ENCODE measurements at regions of chr5 and their contacts with region 1.

Region 1: DNA sequence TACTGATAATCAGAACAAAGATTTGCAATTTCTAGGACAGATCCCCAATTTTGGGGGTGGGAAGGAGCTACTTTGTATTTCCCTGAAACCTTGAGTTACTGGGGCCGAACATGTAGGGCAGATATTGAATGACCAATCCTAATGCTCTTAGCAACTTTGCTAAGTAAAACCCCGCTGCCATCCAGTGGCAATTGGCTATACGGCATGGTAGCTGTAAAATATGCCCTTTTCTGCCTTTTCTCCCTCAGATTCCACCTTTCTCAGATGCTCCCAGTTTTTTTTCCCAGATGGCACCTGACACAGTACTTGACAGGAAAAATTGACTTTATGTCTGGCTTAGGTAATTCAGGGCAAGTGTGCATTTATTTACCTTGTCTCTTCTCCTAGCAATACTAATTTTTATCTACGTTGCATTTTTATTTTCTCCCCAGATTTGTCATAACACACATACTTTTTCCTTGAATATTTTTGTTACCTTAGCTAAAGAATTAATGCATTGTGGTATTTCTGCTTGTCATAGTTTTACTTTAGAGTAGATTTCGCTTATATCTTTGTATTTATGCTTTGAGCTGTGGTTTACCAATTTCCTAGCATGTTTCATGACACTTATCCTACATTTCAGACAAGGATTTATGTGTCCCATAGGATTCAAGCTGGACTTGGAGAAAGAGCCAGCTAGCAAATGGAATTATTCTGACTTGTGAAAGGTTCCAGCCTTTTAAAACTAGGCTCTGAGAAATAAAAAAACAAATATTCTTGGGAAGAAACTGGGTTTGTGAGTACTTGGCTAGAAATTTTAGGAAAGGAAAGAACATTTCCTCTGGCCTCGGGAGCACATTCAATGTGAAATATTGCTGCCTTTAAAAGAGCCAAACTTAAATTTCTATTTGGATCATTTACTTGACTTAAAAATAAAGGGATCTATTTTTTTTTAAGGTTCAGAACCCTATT is 37.4 kb downstream of the PIK3R1 start:
- DNase-seq: no peak
- H3K4me3 ChIP-seq: no peak overlapping the region
- CTCF ChIP-seq: peak; percentile 80

Region 2: GRCh38 chr5:67156976-67157583 is 1095.9 kb before region 1 on chr5:
- CTCF ChIA-PET with region 1: interaction called, 13 read pairs
- POLR2A ChIA-PET with region 1: no interaction called
- DNase-seq: no peak
- H3K4me3 ChIP-seq: no peak overlapping the region
- CTCF ChIP-seq: peak; percentile 65

Region 3: GRCh38 chr5:68159224-68159951 is 93.6 kb before region 1 on chr5:
- CTCF ChIA-PET with region 1: no interaction called
- POLR2A ChIA-PET with region 1: no interaction called
- DNase-seq: no peak
- H3K4me3 ChIP-seq: no peak overlapping the region
- CTCF ChIP-seq: no peak

Region 4: DNA sequence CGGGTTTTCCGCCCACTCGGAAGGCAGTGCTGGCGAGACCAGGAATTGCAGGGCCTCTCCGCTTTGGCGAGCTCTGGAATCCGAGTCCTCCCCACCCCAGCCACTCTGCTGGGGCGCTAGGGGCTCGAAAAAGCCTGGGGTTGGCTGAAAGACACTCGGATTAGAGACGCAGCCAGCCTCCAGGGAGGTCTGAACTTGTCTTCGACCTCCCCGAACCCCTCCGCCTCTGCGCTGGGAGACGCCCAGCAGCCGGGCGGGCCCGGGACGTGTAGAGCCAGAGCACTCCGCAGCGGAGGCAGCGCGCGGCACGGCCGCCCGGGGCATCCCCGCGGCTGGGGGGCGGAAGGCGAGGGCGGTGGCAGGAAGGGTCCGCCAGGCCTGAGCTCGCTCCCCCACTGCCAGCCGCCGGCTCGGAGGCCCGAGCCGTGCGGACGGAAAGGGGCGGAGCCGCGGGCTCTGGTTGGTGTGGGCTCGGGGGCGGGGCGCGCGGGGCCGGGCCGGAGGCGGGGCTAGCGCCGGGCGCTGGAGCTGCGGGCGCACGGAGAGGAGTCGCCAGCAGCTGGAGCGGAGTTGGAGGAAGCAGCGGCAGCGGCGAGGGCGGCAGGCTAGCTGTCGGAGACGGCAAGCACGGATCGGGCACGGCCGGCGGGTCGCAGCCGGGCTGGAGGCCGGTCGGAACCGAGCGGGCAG is 37.6 kb before region 1 on chr5 and contains the start of gene PIK3R1:
- CTCF ChIA-PET with region 1: interaction called, 19 read pairs
- POLR2A ChIA-PET with region 1: interaction called, 4 read pairs
- DNase-seq: peak; percentile 49
- H3K4me3 ChIP-seq: peak within 1 kb of the TSS; percentile 88
- CTCF ChIP-seq: peak; percentile 50

Region 5: GRCh38 chr5:68239487-68239886 is 13.5 kb before region 1 on chr5:
- CTCF ChIA-PET with region 1: interaction called, 13 read pairs
- POLR2A ChIA-PET with region 1: no interaction called
- DNase-seq: no peak
- H3K4me3 ChIP-seq: no peak overlapping the region
- CTCF ChIP-seq: no peak